ENCODE measurements at regions of chr7 and their contacts with region 1.

Region 1: GRCh38 chr7:151304856-151305255 is 36.8 kb upstream of the NUB1 start:
- DNase-seq: no peak
- ATAC-seq: no peak
- H3K4me3 ChIP-seq: no peak overlapping the region
- H3K27ac ChIP-seq: no peak overlapping the region
- H3K4me1 ChIP-seq: peaks cover 8% of the 10 kb centered on the region
- H3K27me3 ChIP-seq: peaks cover 0 to 26% (median 1%) of the 10 kb centered on the region in 3 donors
- CTCF ChIP-seq: no peak

Region 2: DNA sequence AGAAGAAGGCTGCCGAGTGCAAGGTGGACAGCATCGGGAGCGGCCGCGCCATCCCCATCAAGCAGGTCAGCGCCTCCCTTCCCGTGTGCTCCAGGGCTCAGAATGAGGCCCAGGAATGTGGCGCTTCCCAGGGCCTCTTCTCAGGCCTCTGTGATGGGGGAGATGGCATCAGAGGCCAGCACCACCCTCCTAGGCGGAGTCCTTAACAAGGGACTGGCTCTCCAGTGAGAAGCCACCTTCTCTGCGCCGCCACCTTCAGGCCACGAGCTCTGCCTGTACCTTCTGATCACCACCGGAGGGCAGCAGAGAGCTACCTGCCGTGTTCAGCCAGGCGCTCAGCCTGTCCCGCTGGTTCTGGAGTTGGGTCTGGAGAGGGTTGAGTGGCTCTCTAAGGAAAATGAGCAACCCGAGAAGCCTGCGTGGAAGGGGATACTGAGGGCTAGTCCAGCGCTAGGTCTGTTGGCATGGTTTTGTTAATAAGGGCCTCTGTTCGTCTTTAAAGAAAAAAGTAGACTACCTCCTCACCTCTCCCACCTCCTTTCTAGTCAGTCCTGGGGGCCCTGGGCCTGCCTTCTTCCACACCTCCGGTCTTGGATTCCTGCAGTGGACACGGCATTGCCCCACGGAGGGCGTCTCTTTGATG is 180.9 kb before region 1 on chr7:
- intact Hi-C with region 1: loop called (anchors 2 to 5 kb)
- DNase-seq: peak; percentile 83 to 91
- ATAC-seq: peak; percentile 83 to 92 (median 88)
- H3K4me3 ChIP-seq: no peak overlapping the region
- H3K27ac ChIP-seq: no peak overlapping the region
- H3K4me1 ChIP-seq: peaks cover 20% of the 10 kb centered on the region
- H3K27me3 ChIP-seq: no peaks in the 10 kb centered on the region
- CTCF ChIP-seq: peak; percentile 99

Region 3: DNA sequence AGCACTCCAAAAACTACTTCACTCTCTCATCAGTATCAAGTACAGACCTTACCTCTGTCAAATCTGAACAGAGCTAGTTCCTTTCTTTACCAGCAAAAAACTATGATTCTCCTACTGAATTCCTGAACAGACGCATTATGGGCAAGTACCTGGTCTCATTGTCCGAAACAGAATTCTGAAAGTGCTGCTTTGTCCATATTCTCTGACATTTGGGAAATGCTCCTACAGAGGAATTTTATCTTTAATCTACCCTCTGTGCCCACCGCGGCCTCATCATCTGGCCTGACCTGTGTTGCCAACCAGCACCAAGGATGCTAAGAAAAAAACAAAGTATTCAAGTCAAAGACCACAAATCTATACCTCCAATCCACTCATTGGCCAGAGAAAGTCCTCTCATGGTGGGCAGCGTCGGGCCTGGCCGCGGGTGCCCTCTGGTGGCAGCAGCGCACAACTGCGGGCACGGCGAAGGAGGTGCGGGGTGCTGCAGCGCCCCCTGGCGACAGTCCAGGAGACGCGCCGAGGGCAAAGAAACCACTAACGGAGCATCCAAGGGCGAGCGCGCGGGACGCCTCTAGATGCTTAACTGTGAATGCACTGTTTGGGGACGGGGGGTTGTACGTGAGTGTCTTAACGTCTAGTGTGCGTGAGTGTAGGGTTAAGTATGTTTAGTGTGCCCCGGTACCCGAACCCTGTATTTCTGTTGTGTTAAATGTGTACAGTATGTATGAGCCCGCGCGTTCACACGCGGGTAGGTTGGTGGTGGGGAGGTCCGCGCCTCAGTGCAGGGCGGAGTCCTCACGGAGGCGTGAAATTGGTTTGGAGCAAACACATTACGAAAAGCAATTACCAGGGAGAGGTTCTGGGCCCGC is 132.3 kb before region 1 on chr7:
- intact Hi-C with region 1: loop called in 1 of 2 experiments (anchors 5 kb)
- DNase-seq: peak; percentile 78 to 90
- ATAC-seq: peak; percentile 78 to 86 (median 82)
- H3K4me3 ChIP-seq: no peak overlapping the region
- H3K27ac ChIP-seq: no peak overlapping the region
- H3K4me1 ChIP-seq: peaks cover 22% of the 10 kb centered on the region
- H3K27me3 ChIP-seq: no peaks in the 10 kb centered on the region
- CTCF ChIP-seq: peak; percentile 100

Region 4: DNA sequence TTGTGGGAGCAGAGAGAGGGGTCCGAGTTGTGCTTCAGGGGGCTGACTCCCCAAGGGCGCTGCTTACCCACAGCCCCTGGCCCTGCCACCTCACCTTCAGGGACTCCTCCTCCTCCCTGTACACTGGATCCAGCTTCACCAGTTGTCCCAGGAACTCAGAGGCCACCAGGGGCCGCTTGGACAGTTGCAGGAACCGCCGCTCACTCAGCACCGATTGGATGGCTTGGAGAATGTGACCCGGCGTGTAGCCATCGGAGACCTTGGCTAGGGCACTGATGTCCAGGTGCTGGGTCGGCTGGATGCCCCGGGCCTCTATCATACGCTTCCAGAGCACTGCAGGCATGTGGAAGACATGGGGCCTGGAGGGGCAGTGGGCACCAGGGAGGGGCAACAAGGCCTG is 113.3 kb before region 1 on chr7:
- intact Hi-C with region 1: loop called (anchors 5 to 10 kb)
- DNase-seq: peak; percentile 70 to 87
- ATAC-seq: peak; percentile 67 to 72 (median 71)
- H3K4me3 ChIP-seq: no peak overlapping the region
- H3K27ac ChIP-seq: peak overlapping the region; percentile 68
- H3K4me1 ChIP-seq: peaks cover 15% of the 10 kb centered on the region
- H3K27me3 ChIP-seq: no peaks in the 10 kb centered on the region
- CTCF ChIP-seq: peak; percentile 35

Region 5: DNA sequence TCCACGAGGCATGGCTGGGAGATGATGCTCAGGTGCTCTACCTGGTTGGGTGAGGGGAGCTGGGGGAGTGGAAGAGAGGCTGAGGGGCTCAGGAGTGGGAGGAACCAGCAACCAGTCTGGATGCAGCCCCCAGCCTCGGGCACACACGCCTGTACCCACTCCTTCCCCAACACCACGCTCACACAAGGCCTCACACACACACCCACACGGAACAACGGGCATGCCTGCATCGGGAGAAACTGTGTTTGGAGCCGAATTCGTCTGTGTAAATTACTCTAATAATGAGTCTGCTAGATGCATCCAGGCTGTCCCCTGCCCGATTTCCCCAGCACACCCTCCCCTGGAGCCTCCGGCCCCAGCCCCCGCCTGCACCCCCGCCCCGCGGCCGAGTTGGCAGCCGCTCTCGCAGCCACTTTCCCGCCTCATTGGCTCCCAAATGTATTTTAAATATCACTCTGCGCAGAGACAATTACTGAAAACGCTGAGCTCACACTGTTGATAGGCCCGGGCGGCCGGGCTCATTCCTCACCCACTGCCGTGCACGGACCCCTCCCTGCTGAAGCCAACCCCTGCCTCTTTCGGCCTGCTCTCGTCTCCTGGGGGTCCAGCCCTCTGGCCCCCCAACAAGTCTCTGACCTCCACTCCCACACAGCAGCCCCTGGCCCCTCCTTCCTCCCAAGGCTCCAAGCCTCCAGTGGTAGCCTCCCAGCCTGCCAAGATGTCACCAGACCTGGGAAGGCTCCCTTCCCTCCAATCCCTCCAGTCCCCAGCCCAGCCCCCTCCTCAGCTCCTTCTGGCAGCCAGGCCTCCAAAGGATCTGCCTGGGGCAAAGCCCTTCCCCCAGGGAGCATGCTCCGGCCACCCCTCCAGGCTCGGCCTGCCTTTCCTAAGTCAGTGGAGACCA is 105.7 kb before region 1 on chr7:
- intact Hi-C with region 1: loop called (anchors 5 to 10 kb)
- DNase-seq: peak in 1 of 2 donors; percentile 41
- ATAC-seq: no peak
- H3K4me3 ChIP-seq: no peak overlapping the region
- H3K27ac ChIP-seq: no peak overlapping the region
- H3K4me1 ChIP-seq: no peaks in the 10 kb centered on the region
- H3K27me3 ChIP-seq: peaks cover 0 to 12% (median 3%) of the 10 kb centered on the region in 3 donors
- CTCF ChIP-seq: no peak

Region 6: GRCh38 chr7:151244196-151244840 is 60.5 kb before region 1 on chr7:
- intact Hi-C with region 1: loop called (anchors 1 to 5 kb)
- DNase-seq: peak in 1 of 2 donors; percentile 64
- ATAC-seq: no peak
- H3K4me3 ChIP-seq: peak overlapping the region; percentile 88
- H3K27ac ChIP-seq: peak overlapping the region; percentile 100
- H3K4me1 ChIP-seq: peaks cover 40% of the 10 kb centered on the region
- H3K27me3 ChIP-seq: no peaks in the 10 kb centered on the region
- CTCF ChIP-seq: peak; percentile 80

Region 7: DNA sequence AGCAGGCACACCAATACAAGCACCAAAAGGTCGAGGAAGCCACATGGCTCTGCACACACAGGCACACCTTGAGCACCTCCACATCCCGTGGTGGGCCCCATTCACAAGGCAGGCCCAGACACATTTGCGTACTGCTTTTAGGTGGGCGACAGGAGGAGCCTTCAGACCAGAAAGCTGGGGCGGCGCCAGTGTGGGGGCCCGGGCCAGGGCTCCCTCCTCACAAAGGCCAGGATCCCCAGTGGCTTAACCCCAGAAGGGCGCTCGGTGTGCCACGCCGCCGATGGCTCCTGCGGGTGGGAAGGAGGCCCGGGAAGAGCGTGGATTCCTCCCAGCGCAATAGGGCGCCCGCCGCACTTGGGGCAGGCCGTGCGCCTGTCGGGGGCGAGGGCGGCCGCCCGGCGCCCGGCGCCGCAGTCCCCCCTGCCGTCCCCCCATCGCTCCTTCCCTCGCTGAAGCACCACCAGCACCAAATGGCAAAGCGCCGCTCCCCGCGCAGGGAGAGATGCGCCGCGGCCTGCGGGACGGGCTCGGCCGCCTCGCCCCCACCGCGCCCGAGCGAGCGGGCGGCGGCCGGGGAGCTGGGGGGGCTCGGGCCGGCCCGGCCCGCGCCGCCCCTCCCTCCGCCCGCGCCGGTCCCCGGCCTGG is 53.4 kb before region 1 on chr7:
- intact Hi-C with region 1: loop called (anchors 2 to 5 kb)
- DNase-seq: peak in 1 of 2 donors; percentile 84
- ATAC-seq: peak in 1 of 4 donors; percentile 0
- H3K4me3 ChIP-seq: peak overlapping the region; percentile 88
- H3K27ac ChIP-seq: peak overlapping the region; percentile 100
- H3K4me1 ChIP-seq: peaks cover 31% of the 10 kb centered on the region
- H3K27me3 ChIP-seq: no peaks in the 10 kb centered on the region
- CTCF ChIP-seq: no peak

Region 8: GRCh38 chr7:151276666-151277590 is 27.9 kb before region 1 on chr7:
- intact Hi-C with region 1: no loop called
- DNase-seq: peak; percentile 63 to 78
- ATAC-seq: peak; percentile 48 to 77 (median 62)
- H3K4me3 ChIP-seq: peak overlapping the region; percentile 56
- H3K27ac ChIP-seq: no peak overlapping the region
- H3K4me1 ChIP-seq: peaks cover 7% of the 10 kb centered on the region
- H3K27me3 ChIP-seq: peaks cover 0 to 3% (median 0%) of the 10 kb centered on the region in 3 donors
- CTCF ChIP-seq: no peak

Region 9: GRCh38 chr7:151341357-151342101 is 36.7 kb after region 1 on chr7 and contains the start of gene NUB1:
- intact Hi-C with region 1: no loop called
- DNase-seq: peak; percentile 92 to 96
- ATAC-seq: peak; percentile 99
- H3K4me3 ChIP-seq: peak within 1 kb of the TSS; percentile 95
- H3K27ac ChIP-seq: peak within 1 kb of the TSS; percentile 91
- H3K4me1 ChIP-seq: peaks cover 14% of the 10 kb centered on the region
- H3K27me3 ChIP-seq: no peaks in the 10 kb centered on the region
- CTCF ChIP-seq: no peak
- total RNA-seq, gene NUB1: 38.2 to 56.2 (median 50.0) TPM